Common myeloid progenitor, CD34-positive (primary cell): ENCODE measurements at regions of chr3 and their contacts with region 1.

Region 1: DNA sequence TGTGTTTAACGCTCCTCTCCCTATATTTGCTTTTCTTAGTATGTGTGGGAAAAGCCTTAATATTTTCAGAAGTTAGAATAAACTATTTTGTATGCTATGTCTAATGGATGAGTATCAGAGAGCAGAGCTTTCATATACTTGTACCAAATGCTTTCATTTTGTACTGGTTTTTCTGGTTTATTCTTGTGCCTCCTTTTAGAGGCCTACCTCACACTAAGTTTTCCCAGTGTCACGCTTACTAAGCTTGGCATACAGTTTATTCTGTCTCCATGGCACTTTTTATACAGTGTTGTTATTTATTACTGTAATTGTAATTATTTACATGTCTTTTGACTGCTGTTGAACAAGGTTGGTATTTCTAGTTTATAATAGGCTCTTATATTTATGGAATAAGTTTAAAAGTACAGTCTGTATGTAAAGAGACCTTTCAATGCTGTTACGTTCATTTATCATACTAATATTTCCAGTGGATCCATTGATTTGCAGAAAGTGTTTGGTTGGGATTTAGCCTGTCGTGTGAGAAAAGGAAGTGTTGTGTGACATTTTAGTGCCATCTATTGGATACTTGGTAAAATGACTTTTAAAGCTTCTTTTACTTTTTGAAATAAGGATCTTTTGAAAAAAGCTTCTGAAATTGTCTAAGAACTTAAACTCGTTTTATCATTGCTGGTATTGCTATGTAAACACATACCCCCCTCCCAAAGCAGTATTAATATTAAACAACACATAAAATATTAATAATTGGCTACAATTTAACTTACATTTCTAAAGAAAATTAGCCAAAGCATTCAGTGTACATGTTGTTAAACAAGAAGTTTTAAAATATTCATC is 5.2 kb upstream of the EBLN2 start:
- DNase-seq: peak; percentile 54 to 83 (median 76)
- H3K4me3 ChIP-seq: no peak overlapping the region
- H3K27ac ChIP-seq: no peak overlapping the region
- H3K4me1 ChIP-seq: peaks cover 0 to 2% (median under 1%) of the 10 kb centered on the region in 4 experiments
- H3K27me3 ChIP-seq: no peaks in the 10 kb centered on the region

Region 2: GRCh38 chr3:72679540-72680198 is 376.6 kb before region 1 on chr3:
- CTCF ChIA-PET with region 1: no interaction called
- POLR2A ChIA-PET with region 1: no interaction called
- DNase-seq: peak; percentile 23 to 87 (median 84)
- H3K4me3 ChIP-seq: no peak overlapping the region
- H3K27ac ChIP-seq: no peak overlapping the region
- H3K4me1 ChIP-seq: peaks cover 0 to 6% (median 3%) of the 10 kb centered on the region in 4 experiments
- H3K27me3 ChIP-seq: no peaks in the 10 kb centered on the region

Region 3: GRCh38 chr3:72847751-72848702 is 208.2 kb before region 1 on chr3 and contains the start of gene SHQ1:
- CTCF ChIA-PET with region 1: interaction called, 47 read pairs
- POLR2A ChIA-PET with region 1: no interaction called
- DNase-seq: peak; percentile 95 to 97 (median 97)
- H3K4me3 ChIP-seq: peak within 1 kb of the TSS; percentile 54 to 96 (median 87)
- H3K27ac ChIP-seq: peak within 1 kb of the TSS in 1 of 2 experiments; percentile 69
- H3K4me1 ChIP-seq: peaks cover 19 to 49% (median 32%) of the 10 kb centered on the region in 4 experiments
- H3K27me3 ChIP-seq: no peaks in the 10 kb centered on the region

Region 4: GRCh38 chr3:72938471-72939265 is 117.6 kb before region 1 on chr3:
- CTCF ChIA-PET with region 1: interaction called, 37 read pairs
- POLR2A ChIA-PET with region 1: no interaction called
- DNase-seq: peak; percentile 51 to 80 (median 78)
- H3K4me3 ChIP-seq: no peak overlapping the region
- H3K27ac ChIP-seq: no peak overlapping the region
- H3K4me1 ChIP-seq: peaks cover 0 to 4% (median 0%) of the 10 kb centered on the region in 4 experiments
- H3K27me3 ChIP-seq: no peaks in the 10 kb centered on the region

Region 5: DNA sequence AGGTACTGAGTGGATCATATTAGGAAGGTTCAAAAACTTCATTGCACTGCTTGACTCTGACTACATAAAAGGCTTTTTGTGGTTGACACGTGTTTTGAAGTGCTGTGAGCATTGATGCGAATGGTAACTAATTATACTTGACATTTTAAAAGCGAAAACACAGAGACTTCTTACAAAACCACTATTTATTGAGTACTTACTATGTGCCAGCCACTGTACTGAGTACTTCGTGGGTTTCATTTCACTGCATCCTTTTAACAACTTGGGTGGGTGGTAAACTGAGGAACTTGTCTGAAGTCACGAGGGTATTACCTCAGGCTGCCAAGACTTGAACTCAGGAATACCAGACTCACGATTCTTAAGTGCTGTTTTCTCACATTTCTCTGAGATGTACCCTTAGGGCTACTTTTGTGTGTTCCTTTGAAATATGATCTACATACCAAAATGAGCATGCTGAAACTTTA is 104.9 kb before region 1 on chr3:
- CTCF ChIA-PET with region 1: interaction called, 34 read pairs
- POLR2A ChIA-PET with region 1: interaction called, 4 read pairs
- DNase-seq: no peak
- H3K4me3 ChIP-seq: no peak overlapping the region
- H3K27ac ChIP-seq: no peak overlapping the region
- H3K4me1 ChIP-seq: no peaks in the 10 kb centered on the region
- H3K27me3 ChIP-seq: no peaks in the 10 kb centered on the region

Region 6: GRCh38 chr3:73045391-73045790 is 10.8 kb before region 1 on chr3:
- CTCF ChIA-PET with region 1: interaction called, 10 read pairs
- POLR2A ChIA-PET with region 1: no interaction called
- DNase-seq: no peak
- H3K4me3 ChIP-seq: no peak overlapping the region
- H3K27ac ChIP-seq: no peak overlapping the region
- H3K4me1 ChIP-seq: peaks cover 0 to 4% (median 0%) of the 10 kb centered on the region in 4 experiments
- H3K27me3 ChIP-seq: no peaks in the 10 kb centered on the region

Region 7: GRCh38 chr3:73086071-73086494 is 29.9 kb after region 1 on chr3:
- CTCF ChIA-PET with region 1: interaction called, 18 read pairs
- POLR2A ChIA-PET with region 1: no interaction called
- DNase-seq: peak; percentile 46 to 61 (median 50)
- H3K4me3 ChIP-seq: peak overlapping the region in 1 of 7 experiments; percentile 2
- H3K27ac ChIP-seq: no peak overlapping the region
- H3K4me1 ChIP-seq: peaks cover 0 to 2% (median 0%) of the 10 kb centered on the region in 4 experiments
- H3K27me3 ChIP-seq: no peaks in the 10 kb centered on the region